Activated CD4-positive, alpha-beta T cell treated with anti-CD3 and anti-CD28 coated beads for 36 hours (primary cell): ENCODE measurements at regions of chr14 and their contacts with region 1.

Region 1: DNA sequence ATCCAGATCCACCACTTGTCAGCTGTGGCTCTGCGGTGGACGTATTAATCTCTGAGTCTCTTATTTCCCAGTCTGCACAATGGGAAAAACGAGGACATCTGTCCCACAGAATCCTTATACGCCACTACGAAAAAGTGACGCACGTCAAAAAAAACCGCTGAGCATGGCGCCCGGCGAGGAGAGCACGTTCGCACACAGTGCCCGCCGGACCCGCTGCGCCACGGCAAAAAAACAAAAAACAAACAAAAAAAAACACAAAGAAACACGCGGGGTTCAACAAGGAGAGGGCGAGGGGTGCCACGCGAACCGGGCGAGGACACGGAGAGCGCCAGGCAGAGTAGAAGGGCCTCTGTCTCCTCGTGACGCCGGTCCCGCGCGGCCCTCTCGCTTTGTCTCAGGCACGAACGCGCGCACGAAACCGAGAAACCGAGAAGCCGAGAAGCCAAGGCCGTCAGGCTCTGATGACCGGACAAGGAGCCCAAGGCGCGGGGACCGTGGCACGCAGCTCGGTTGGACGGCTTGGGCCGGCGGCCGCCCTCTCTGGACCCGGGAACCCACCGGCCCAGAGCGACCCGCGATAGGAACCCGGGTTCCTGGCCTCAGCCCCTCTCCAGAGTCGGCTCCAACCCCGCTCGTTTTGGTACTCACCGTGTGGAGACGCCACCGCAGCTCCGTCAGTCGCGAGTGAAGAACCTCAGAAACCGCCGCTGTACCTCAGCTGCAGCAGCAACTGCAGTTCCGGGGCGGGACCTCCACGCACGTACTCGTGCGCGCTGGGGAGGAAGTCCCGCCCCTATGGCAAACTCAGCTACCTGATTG is at the start of gene DDX24:
- DNase-seq: peak; percentile 98
- ATAC-seq: peak; percentile 97
- H3K4me3 Mint-ChIP-seq: peak within 1 kb of the TSS; percentile 99
- H3K27ac Mint-ChIP-seq: peak within 1 kb of the TSS; percentile 100
- H3K4me1 Mint-ChIP-seq: peaks cover 48% of the 10 kb centered on the region
- H3K27me3 Mint-ChIP-seq: no peaks in the 10 kb centered on the region
- total RNA-seq, gene DDX24: 259 to 390 TPM

Region 2: DNA sequence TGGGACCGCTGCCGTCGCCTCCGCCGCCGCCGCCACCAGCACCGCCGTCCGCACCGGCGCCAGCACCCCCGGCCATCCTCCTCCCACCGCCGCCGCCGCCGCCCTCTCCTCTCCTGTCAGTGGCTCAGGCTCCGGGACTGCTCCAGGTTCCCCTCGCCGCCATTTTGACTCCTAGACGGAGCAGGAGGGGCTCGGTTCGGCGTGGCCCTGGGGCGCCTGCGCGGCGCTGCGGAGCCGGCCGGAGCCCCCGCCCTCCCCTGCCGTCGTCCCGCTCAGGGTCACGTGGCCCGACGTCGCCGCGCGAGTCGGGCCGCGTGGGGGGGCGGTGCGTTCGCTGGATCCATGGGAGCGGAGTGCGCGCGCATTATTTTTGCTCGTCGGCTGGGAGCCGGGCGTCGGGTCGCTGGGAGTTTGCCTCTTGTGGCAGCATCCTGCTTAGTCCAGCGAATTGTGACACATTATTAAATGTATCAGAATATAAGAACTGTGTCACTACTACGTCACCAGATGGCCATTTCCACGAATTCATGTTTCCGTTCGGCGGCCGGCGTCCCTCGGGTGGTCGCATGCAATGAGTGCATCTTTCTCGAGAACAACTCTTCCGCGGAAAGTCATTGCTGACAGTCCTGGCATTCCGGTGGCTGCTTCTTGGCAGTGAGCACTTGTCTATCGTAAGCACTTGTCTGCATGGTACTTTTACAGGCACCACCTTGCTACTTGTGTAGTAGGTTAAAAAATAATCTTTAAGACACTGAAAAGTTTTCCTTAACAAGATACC is 747.6 kb before region 1 on chr14 and contains the start of gene BTBD7:
- CTCF ChIA-PET with region 1: no interaction called
- POLR2A ChIA-PET with region 1: no interaction called
- intact Hi-C with region 1: loop called in 1 of 2 experiments (anchors 2 kb)
- DNase-seq: peak; percentile 97
- ATAC-seq: peak; percentile 94
- H3K4me3 Mint-ChIP-seq: peak within 1 kb of the TSS; percentile 90
- H3K27ac Mint-ChIP-seq: peak within 1 kb of the TSS; percentile 88
- H3K4me1 Mint-ChIP-seq: peaks cover 46% of the 10 kb centered on the region
- H3K27me3 Mint-ChIP-seq: no peaks in the 10 kb centered on the region
- total RNA-seq, gene BTBD7: 6.5 to 9.5 TPM

Region 3: DNA sequence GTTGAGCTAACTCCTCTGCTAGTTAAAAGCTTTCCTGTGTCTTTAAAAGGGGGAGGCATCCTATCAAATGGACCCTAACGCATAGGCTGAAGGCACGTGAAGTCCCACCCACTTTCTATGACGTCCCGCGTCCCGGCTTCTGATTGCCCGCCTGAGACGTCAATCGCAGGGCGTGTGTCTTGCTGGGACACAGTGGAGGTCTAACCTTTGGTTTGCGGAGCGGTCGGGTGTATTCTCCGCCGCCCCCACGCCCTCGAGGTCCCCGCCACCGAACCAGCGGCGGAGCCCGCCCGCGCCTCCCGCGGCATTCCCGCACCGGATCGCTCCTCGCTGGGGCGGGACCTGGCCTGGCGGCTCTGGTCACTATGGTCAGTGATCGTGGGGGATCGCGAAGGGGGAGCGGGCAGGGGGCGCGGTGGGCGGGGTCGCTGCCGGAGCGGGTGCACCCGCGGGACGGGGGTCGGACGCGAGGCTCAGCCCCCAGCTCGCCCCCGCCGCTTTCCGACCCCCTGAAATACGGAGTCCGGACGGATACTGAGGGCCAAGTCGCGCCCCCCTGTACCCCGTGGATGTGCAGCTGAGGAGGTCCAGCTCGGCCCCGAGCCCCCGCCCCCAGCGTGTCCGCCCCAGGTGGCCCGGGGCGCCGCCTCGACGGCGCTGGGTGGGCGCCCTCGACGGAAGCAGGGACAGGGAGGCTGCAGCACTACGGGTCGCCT is 54.3 kb before region 1 on chr14 and contains the start of gene OTUB2:
- CTCF ChIA-PET with region 1: interaction called, 3 read pairs
- POLR2A ChIA-PET with region 1: interaction called, 5 read pairs
- intact Hi-C with region 1: loop called (anchors 1 kb)
- DNase-seq: peak; percentile 98
- ATAC-seq: peak; percentile 99
- H3K4me3 Mint-ChIP-seq: peak within 1 kb of the TSS; percentile 54
- H3K27ac Mint-ChIP-seq: no peak within 1 kb of the TSS
- H3K4me1 Mint-ChIP-seq: peaks cover 32% of the 10 kb centered on the region
- H3K27me3 Mint-ChIP-seq: no peaks in the 10 kb centered on the region
- total RNA-seq, gene OTUB2: 0.75 to 0.93 TPM

Region 4: DNA sequence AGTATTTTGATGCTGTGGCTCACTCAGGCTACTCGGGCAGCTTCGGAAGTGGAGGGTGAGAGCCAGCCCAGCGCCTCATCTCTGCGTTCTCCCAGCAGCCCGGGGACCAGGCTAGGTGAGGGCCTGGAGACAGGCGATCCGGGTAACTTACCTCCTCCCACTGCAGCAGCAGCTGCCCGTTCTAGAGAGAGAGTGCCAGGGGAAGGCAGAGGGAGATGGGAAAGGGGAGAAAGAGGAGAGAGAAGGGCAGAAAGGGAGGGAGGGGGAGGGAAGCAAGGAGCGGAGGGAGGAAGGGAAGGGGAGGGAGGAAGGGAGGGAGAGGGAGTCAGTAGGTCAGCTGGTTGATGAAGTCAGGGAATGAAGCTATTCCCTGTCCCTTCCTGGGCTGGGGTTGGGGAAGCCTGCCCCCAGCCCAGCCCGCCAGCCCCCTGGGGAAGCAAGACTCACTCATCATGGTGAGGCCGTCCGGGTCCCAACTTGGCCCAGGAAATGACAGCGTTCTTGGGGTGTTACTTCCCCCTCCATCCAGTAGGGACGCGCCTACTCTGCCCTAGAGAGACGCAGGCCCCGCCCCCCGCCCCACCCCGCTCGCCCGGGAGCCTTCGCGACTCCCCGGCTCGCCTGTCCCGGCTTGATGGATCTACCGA is 48.6 kb after region 1 on chr14 and contains the start of gene IFI27L2:
- CTCF ChIA-PET with region 1: interaction called, 7 read pairs
- POLR2A ChIA-PET with region 1: interaction called, 3 read pairs
- intact Hi-C with region 1: loop called (anchors 1 kb)
- DNase-seq: peak; percentile 85
- ATAC-seq: peak; percentile 97
- H3K4me3 Mint-ChIP-seq: peak within 1 kb of the TSS; percentile 78
- H3K27ac Mint-ChIP-seq: peak within 1 kb of the TSS; percentile 37
- H3K4me1 Mint-ChIP-seq: peaks cover 21% of the 10 kb centered on the region
- H3K27me3 Mint-ChIP-seq: peaks cover 4% of the 10 kb centered on the region
- total RNA-seq, gene IFI27L2: 57.3 to 66.9 TPM

Region 5: DNA sequence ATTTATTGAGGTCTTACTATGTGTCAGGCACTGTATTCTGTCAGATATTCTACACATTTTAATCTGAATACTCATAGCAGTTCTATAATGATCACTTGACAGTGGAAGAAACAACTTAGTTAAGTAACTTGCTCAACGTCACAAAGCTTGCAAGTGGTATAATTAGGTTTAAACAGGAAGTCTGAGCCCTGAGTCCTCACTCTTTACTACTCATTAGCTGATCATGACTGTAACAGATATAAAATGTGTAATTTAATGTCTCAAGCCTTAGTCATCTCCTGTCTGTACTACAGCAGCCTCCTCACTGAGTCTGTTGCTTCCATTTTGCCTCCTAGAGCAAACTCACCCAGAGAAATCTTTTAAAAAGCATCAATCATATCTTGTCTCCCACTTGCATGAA is 132.3 kb after region 1 on chr14:
- CTCF ChIA-PET with region 1: no interaction called
- POLR2A ChIA-PET with region 1: no interaction called
- intact Hi-C with region 1: no loop called
- DNase-seq: no peak
- ATAC-seq: peak; percentile 75
- H3K4me3 Mint-ChIP-seq: no peak overlapping the region
- H3K27ac Mint-ChIP-seq: no peak overlapping the region
- H3K4me1 Mint-ChIP-seq: no peaks in the 10 kb centered on the region
- H3K27me3 Mint-ChIP-seq: peaks cover 13% of the 10 kb centered on the region

Region 6: GRCh38 chr14:94342334-94342934 is 261.8 kb after region 1 on chr14:
- CTCF ChIA-PET with region 1: no interaction called
- POLR2A ChIA-PET with region 1: no interaction called
- intact Hi-C with region 1: loop called in 1 of 2 experiments (anchors 10 kb)
- DNase-seq: peak; percentile 77
- ATAC-seq: peak; percentile 71
- H3K4me3 Mint-ChIP-seq: no peak overlapping the region
- H3K27ac Mint-ChIP-seq: peak overlapping the region; percentile 93
- H3K4me1 Mint-ChIP-seq: peaks cover 79% of the 10 kb centered on the region
- H3K27me3 Mint-ChIP-seq: peaks cover 2% of the 10 kb centered on the region

Region 7: GRCh38 chr14:95534299-95535225 is 1453.9 kb after region 1 on chr14 and contains the start of gene GLRX5:
- CTCF ChIA-PET with region 1: no interaction called
- POLR2A ChIA-PET with region 1: interaction called, 3 read pairs
- intact Hi-C with region 1: loop called in 1 of 2 experiments (anchors 5 kb)
- DNase-seq: peak; percentile 98
- ATAC-seq: peak; percentile 94
- H3K4me3 Mint-ChIP-seq: peak within 1 kb of the TSS; percentile 93
- H3K27ac Mint-ChIP-seq: peak within 1 kb of the TSS; percentile 94
- H3K4me1 Mint-ChIP-seq: peaks cover 60% of the 10 kb centered on the region
- H3K27me3 Mint-ChIP-seq: no peaks in the 10 kb centered on the region
- total RNA-seq, gene GLRX5: 37.9 to 44.1 TPM